A549 (cell line): ENCODE measurements at regions of chrX and their contacts with region 1.

Region 1: GRCh38 chrX:18422325-18422724 is 3.1 kb upstream of the CDKL5 start:
- DNase-seq: peak; percentile 41 to 92
- ATAC-seq: peak; percentile 50 to 63
- H3K4me3 ChIP-seq: peak overlapping the region; percentile 2; the same call in 1 of the 3 replicates
- H3K27ac ChIP-seq: peak overlapping the region; percentile 72 to 92
- H3K4me1 ChIP-seq: peaks cover 32% of the 10 kb centered on the region
- CTCF ChIP-seq: no peak
- EP300 ChIP-seq: peak; percentile 45 to 74; a peak in 2 of 5 replicates
- POLR2A ChIP-seq: no peak
- RAD21 ChIP-seq: no peak

Region 2: GRCh38 chrX:18146954-18147353 is 275.4 kb before region 1 on chrX:
- CTCF ChIA-PET with region 1: no interaction called
- POLR2A ChIA-PET with region 1: no interaction called
- DNase-seq: peak in 1 of 2 experiments; percentile 18
- ATAC-seq: 0 out of 6 replicates have a peak, but pooled peaks of 1 of the 2 experiments have one; percentile 38
- H3K4me3 ChIP-seq: no peak overlapping the region
- H3K27ac ChIP-seq: no peak overlapping the region
- H3K4me1 ChIP-seq: peaks cover 15% of the 10 kb centered on the region
- CTCF ChIP-seq: no peak
- EP300 ChIP-seq: no peak
- POLR2A ChIP-seq: no peak
- RAD21 ChIP-seq: no peak

Region 3: GRCh38 chrX:18377796-18378195 is 44.5 kb before region 1 on chrX:
- CTCF ChIA-PET with region 1: no interaction called
- POLR2A ChIA-PET with region 1: no interaction called
- DNase-seq: peak in 1 of 2 experiments; percentile 53
- ATAC-seq: peak; percentile 76 to 87; a peak in 4 of 6 replicates
- H3K4me3 ChIP-seq: no peak overlapping the region
- H3K27ac ChIP-seq: no peak overlapping the region
- H3K4me1 ChIP-seq: no peaks in the 10 kb centered on the region
- CTCF ChIP-seq: peak; percentile 52
- EP300 ChIP-seq: no peak
- POLR2A ChIP-seq: no peak
- RAD21 ChIP-seq: peak; percentile 69 to 82

Region 4: GRCh38 chrX:18410043-18410442 is 12.3 kb before region 1 on chrX:
- CTCF ChIA-PET with region 1: interaction called, 19 read pairs
- POLR2A ChIA-PET with region 1: interaction called, 3 read pairs
- DNase-seq: peak; percentile 34 to 75
- ATAC-seq: peak; percentile 73 to 84; a peak in 5 of 6 replicates
- H3K4me3 ChIP-seq: no peak overlapping the region
- H3K27ac ChIP-seq: peak overlapping the region in 1 of 2 experiments; percentile 50; a peak in 1 of 6 replicates
- H3K4me1 ChIP-seq: peaks cover 11% of the 10 kb centered on the region
- CTCF ChIP-seq: peak; percentile 65
- EP300 ChIP-seq: no peak
- POLR2A ChIP-seq: no peak
- RAD21 ChIP-seq: peak; percentile 79 to 82

Region 5: GRCh38 chrX:18448416-18448815 is 26.1 kb after region 1 on chrX:
- CTCF ChIA-PET with region 1: no interaction called
- POLR2A ChIA-PET with region 1: no interaction called
- DNase-seq: no peak
- ATAC-seq: no peak
- H3K4me3 ChIP-seq: no peak overlapping the region
- H3K27ac ChIP-seq: peak overlapping the region in 1 of 2 experiments; percentile 82; a peak in 3 of 6 replicates
- H3K4me1 ChIP-seq: peaks cover 20% of the 10 kb centered on the region; the same call in 2 of the 3 replicates
- CTCF ChIP-seq: no peak
- EP300 ChIP-seq: no peak
- POLR2A ChIP-seq: no peak
- RAD21 ChIP-seq: no peak

Region 6: DNA sequence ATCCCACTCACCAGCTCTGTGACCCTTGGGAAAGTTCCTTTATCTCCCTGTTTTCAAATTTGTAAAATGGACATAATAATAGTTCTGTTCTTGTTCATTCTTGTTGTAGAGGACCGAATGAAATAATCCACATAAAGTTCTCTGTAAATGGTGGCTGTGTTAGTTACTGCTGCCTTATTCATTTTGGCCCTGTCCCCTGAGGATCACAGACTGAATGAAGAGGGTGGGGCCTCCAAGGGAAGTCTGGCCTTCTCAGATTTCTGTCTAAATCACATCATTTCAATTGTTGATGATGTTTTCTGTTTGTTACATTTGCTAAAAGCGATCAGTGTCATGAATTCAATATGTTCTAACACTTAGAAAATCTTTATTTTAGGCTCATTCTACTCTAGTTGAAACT is 403.1 kb after region 1 on chrX:
- CTCF ChIA-PET with region 1: no interaction called
- POLR2A ChIA-PET with region 1: no interaction called
- DNase-seq: no peak
- ATAC-seq: no peak
- H3K4me3 ChIP-seq: no peak overlapping the region
- H3K27ac ChIP-seq: no peak overlapping the region
- H3K4me1 ChIP-seq: no peaks in the 10 kb centered on the region
- CTCF ChIP-seq: no peak
- EP300 ChIP-seq: no peak
- POLR2A ChIP-seq: no peak
- RAD21 ChIP-seq: no peak